ENCODE measurements at regions of chr14 and their contacts with region 1.

Region 1: DNA sequence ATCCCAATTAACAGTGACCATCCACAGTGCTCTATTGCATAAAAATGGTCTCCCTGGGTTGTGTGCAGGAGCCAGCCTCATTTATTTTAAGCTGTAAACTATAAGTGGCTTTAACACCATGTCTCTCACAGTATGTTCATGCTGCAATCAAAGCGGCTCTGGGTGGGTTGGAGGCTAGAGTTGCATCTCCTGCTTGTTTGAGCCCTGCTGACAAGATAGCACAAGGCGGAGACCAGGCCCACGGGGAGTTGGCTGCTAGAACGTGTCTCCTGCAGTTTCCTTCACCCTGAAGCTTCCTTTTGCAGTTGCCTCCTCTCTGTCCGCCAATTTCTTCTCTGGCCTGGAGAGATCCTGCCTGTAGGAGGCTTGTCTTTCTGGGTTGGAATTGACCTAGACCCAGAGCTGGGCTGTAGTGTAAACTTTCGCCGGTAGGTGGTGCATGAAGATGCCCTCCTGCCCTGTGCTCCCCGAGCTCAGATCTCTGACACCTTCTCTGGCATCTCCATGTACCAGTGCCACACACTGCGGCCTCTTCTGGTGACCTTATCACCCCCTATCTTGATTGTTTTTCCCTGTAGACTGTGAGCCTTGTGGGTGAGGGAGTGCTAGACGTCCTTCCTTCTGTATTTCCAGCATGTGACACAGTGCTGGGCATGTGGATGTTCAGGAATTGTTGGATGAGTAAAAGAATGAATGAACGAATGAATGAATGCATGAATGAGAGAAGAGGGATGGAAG is 10.3 kb downstream of the OTUB2 start:
- DNase-seq: no peak
- H3K4me3 ChIP-seq: no peak overlapping the region
- CTCF ChIP-seq: peak; percentile 87

Region 2: DNA sequence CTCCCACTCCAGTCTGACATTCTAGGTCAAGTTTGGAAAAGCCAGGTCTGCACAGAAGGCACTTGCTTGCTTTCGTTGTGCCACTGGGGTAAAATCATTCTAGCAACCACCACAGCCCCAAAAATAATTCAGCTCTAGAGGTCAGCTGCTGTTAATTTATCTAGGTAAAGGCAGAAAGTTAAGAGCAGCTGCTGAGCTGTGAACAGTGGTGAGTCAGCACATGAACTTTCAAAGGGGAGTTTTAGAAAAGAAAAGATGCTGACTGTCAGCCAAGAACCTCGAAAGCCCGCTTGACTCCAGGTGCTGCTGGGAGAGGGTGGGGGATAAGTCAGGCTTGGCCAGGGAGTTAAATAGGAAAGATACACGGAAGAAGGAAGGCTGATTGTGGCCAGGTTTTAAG is 26.7 kb before region 1 on chr14:
- CTCF ChIA-PET with region 1: interaction called, 11 read pairs
- POLR2A ChIA-PET with region 1: no interaction called
- DNase-seq: no peak
- H3K4me3 ChIP-seq: no peak overlapping the region
- CTCF ChIP-seq: no peak

Region 3: DNA sequence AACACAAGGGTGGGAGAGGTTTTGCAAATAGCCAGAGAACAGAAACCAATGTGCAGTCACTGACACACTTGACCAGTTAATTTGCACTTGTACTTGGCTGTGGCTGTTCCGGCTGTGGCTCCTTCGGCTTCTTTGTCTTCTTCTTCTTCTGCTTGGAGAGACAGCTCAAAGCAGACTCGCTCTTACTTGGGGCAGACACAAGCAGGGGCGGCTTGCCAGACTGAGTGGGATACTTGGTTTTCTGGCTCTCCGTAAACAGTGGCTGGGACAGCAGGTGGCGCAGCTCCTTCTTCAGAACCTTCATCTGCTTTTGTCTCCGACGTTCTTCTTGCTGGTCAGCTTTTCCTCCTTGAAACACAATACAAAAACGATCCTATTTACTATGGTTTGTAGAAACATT is 14.6 kb after region 1 on chr14:
- CTCF ChIA-PET with region 1: interaction called, 139 read pairs
- POLR2A ChIA-PET with region 1: no interaction called
- DNase-seq: no peak
- H3K4me3 ChIP-seq: no peak overlapping the region
- CTCF ChIP-seq: peak; percentile 56

Region 4: DNA sequence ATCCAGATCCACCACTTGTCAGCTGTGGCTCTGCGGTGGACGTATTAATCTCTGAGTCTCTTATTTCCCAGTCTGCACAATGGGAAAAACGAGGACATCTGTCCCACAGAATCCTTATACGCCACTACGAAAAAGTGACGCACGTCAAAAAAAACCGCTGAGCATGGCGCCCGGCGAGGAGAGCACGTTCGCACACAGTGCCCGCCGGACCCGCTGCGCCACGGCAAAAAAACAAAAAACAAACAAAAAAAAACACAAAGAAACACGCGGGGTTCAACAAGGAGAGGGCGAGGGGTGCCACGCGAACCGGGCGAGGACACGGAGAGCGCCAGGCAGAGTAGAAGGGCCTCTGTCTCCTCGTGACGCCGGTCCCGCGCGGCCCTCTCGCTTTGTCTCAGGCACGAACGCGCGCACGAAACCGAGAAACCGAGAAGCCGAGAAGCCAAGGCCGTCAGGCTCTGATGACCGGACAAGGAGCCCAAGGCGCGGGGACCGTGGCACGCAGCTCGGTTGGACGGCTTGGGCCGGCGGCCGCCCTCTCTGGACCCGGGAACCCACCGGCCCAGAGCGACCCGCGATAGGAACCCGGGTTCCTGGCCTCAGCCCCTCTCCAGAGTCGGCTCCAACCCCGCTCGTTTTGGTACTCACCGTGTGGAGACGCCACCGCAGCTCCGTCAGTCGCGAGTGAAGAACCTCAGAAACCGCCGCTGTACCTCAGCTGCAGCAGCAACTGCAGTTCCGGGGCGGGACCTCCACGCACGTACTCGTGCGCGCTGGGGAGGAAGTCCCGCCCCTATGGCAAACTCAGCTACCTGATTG is 44.2 kb after region 1 on chr14 and contains the start of gene DDX24:
- CTCF ChIA-PET with region 1: interaction called, 12 read pairs
- POLR2A ChIA-PET with region 1: no interaction called
- DNase-seq: peak; percentile 66
- H3K4me3 ChIP-seq: peak within 1 kb of the TSS; percentile 95
- CTCF ChIP-seq: no peak